Activated CD4-positive, alpha-beta memory T cell treated with anti-CD3 and anti-CD28 coated beads for 36 hours (primary cell): ENCODE measurements at regions of chr9 and their contacts with region 1.

Region 1: DNA sequence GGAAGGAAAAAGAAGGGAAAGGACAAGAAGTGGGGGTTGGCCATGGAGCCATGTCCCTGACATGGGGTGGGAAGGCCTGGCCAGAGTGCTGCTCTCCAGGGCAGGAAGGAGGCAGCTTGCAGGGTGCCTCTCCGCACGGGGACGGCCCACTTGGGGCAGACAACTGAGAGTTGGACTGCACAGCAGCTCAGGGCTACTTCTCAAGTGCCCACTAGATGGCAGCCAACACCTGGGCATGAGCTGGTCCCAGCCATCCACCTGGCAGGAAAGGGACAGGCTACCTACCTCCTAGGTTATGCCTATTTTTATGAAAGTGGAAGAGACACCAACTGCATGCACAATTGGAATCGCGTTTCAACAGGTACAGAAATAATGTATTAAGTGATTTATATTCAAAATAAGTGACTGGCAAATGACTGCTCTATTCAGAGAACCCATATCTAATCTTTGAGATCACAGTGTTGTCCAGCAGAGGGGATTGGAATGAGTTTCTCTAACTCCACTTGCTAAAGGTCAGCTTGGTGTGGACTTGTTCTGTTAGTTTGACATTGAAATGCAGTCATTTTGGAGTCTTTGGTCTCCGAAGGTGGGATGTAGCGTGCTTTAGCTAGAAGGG is 113.4 kb downstream of the SYK start:
- DNase-seq: peak; percentile 81
- H3K4me3 Mint-ChIP-seq: no peak overlapping the region
- H3K27ac Mint-ChIP-seq: no peak overlapping the region
- H3K4me1 Mint-ChIP-seq: no peaks in the 10 kb centered on the region
- H3K27me3 Mint-ChIP-seq: no peaks in the 10 kb centered on the region

Region 2: DNA sequence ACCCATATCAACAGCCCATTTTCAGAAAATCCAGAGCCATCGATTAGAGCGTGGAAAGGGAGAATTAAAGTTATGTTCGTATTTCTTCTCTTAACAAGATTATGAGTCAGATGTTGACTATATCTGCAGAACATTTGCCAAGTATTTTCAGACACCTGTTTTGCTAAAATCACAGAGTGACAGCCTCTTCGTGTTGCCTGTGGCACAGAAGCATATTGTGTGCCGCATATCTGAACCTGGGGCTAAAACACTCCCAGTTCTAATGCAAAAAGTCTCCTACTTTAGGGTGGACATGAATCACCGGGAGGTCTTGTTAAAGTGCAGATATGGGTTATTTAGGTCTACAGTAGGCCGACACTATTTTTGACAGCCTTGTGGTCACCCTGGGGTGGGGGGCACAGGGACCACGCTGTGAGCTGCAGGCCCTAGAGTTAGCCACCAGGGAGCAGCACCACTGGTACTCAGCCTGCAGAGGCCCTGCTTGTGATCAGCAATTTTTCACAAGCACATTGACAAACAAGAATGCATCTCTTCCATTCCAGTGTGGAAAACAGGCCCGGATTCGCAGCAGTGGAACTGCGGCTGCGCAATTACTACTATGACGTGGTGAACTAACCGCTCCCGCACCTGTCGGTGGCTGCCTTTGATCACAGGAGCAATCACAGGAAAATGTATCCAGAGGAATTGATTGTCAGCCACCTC is 19.8 kb before region 1 on chr9:
- CTCF ChIA-PET with region 1: interaction called, 10 read pairs
- POLR2A ChIA-PET with region 1: no interaction called
- intact Hi-C with region 1: no loop called
- DNase-seq: no peak
- H3K4me3 Mint-ChIP-seq: no peak overlapping the region
- H3K27ac Mint-ChIP-seq: no peak overlapping the region
- H3K4me1 Mint-ChIP-seq: no peaks in the 10 kb centered on the region
- H3K27me3 Mint-ChIP-seq: peaks cover 4% of the 10 kb centered on the region

Region 3: DNA sequence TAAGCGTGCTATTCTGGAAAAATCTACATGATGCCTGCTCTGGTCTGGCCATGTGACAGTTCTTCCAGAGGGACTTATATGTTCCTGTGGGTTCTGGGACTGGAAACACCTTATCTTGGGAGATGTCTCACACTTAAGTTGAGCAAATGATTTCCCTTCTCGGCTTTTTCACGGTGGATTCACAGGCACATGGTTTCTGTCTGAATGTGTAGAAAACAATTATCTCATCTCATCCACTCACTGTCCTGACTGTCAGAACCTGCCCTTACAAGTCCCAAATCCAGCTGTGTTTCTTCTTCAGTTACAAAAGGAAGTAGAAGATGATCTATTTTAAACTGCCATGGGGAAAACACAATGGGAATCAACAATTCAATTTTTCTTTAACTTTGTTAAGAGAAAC is 70.7 kb after region 1 on chr9:
- CTCF ChIA-PET with region 1: interaction called, 10 read pairs
- POLR2A ChIA-PET with region 1: no interaction called
- intact Hi-C with region 1: loop called (anchors 5 kb)
- DNase-seq: no peak
- H3K4me3 Mint-ChIP-seq: no peak overlapping the region
- H3K27ac Mint-ChIP-seq: no peak overlapping the region
- H3K4me1 Mint-ChIP-seq: peaks cover 2% of the 10 kb centered on the region
- H3K27me3 Mint-ChIP-seq: peaks cover 11% of the 10 kb centered on the region

Region 4: DNA sequence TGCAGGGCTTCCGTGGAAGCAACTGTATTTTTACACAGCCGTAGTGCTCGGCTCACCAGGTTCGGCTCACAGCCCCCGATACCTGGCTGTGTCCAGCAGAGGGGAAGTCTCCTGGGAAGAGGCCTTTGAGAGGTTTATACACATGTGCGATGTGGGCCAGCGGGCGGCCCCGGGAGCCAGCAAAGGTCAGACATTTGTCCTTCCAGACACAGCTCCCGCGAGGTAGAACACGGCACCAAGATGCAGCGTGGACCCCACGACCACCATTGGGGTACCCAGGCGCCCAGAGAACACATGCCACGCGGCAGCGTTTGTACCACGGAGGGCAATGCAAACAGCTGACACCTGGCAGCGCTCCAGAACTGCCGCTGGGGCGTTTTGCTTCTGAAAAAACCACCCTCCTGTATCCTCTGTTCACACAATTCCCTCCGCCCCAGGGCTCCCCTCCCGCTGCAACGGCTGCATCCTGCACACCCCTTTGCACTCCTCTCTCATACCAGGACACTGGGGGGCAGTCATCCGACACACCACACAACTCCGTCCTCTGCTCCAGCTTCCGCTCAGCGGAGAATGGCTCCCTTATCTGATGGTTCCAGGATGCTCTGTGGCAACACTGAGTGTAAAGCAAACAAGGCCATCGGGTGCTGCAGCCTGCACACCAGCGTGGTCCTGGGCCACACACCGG is 122.0 kb after region 1 on chr9:
- CTCF ChIA-PET with region 1: interaction called, 11 read pairs
- POLR2A ChIA-PET with region 1: no interaction called
- intact Hi-C with region 1: loop called (anchors 1 kb)
- DNase-seq: peak; percentile 86
- H3K4me3 Mint-ChIP-seq: peak overlapping the region; percentile 7
- H3K27ac Mint-ChIP-seq: peak overlapping the region; percentile 42
- H3K4me1 Mint-ChIP-seq: peaks cover 48% of the 10 kb centered on the region
- H3K27me3 Mint-ChIP-seq: peaks cover 22% of the 10 kb centered on the region

Region 5: GRCh38 chr9:91433180-91433579 is 518.2 kb after region 1 on chr9:
- CTCF ChIA-PET with region 1: interaction called, 84 read pairs
- POLR2A ChIA-PET with region 1: interaction called, 3 read pairs
- intact Hi-C with region 1: loop called (anchors 1 kb)
- DNase-seq: no peak
- H3K4me3 Mint-ChIP-seq: no peak overlapping the region
- H3K27ac Mint-ChIP-seq: no peak overlapping the region
- H3K4me1 Mint-ChIP-seq: peaks cover 15% of the 10 kb centered on the region
- H3K27me3 Mint-ChIP-seq: peaks cover 14% of the 10 kb centered on the region

Region 6: DNA sequence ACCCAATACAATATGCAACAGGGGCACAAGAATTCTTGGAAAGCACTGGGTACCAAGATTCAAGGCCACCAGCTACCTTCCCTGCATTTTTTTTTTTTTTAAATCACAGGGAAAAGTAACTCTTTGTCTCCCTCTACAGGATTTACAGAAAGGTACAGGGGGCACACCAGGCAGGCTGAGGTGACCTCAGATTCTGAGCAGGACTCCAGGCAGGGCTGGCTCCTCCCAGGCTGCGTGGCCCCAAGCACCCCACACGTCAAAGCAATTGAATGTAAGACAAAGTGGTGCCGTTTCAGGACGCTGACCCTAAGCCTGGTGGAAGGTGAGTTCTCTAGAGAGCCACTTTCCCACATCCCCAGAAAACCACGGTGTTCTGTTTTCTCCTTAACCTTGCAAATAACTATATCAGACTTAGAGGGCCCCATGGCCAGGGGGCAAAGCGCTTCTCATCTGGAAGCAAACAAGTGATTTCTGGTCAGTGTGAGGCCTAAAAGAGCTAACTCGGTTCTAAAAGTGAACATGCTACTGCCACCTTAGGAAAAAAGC is 812.4 kb after region 1 on chr9:
- CTCF ChIA-PET with region 1: interaction called, 46 read pairs
- POLR2A ChIA-PET with region 1: no interaction called
- intact Hi-C with region 1: loop called (anchors 1 kb)
- DNase-seq: peak; percentile 48
- H3K4me3 Mint-ChIP-seq: no peak overlapping the region
- H3K27ac Mint-ChIP-seq: no peak overlapping the region
- H3K4me1 Mint-ChIP-seq: no peaks in the 10 kb centered on the region
- H3K27me3 Mint-ChIP-seq: peaks cover 3% of the 10 kb centered on the region